ENCODE measurements at regions of chr5 and their contacts with region 1.

Region 1: DNA sequence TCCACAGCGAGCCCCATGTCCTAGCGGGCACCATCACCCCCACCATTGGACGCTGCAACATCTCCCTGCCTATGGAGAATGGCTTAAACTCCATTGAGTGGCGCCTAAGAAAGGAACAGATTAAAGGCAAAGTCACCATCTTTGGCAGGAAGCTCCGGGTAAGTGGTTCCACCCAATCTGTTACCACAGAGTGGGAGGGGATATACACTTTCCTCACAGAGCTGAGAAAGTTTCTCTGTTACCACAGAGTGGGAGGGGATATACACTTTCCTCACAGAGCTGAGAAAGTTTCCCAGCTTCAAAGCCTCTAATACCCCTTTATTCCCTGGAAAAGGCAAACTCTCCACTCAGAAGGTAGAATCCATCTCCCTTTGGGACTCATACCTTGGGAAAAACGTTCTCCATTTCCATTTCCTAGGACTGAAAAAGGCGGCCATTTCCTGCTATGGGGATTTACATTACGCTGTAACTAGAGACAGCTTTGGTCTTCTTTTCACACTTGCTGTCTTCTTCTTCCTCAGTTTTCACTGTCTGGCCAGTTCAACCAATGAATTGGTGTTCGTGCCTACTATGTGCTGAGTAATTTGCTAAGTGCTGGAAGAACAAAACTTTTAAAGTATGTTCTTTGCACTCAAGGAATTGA is 63.4 kb upstream of the WWC1 start:
- DNase-seq: peak; percentile 82
- H3K4me3 Mint-ChIP-seq: peak overlapping the region; percentile 32
- H3K27ac Mint-ChIP-seq: peak overlapping the region; percentile 64
- H3K4me1 Mint-ChIP-seq: peaks cover 23% of the 10 kb centered on the region
- H3K27me3 Mint-ChIP-seq: peaks cover 26% of the 10 kb centered on the region

Region 2: GRCh38 chr5:167244583-167244982 is 983.5 kb before region 1 on chr5:
- intact Hi-C with region 1: no loop called
- DNase-seq: no peak
- H3K4me3 Mint-ChIP-seq: no peak overlapping the region
- H3K27ac Mint-ChIP-seq: no peak overlapping the region
- H3K4me1 Mint-ChIP-seq: no peaks in the 10 kb centered on the region
- H3K27me3 Mint-ChIP-seq: no peaks in the 10 kb centered on the region

Region 3: GRCh38 chr5:168120401-168121137 is 107.5 kb before region 1 on chr5:
- intact Hi-C with region 1: loop called (anchors 1 kb)
- DNase-seq: no peak
- H3K4me3 Mint-ChIP-seq: no peak overlapping the region
- H3K27ac Mint-ChIP-seq: peak overlapping the region; percentile 46
- H3K4me1 Mint-ChIP-seq: peaks cover 15% of the 10 kb centered on the region
- H3K27me3 Mint-ChIP-seq: peaks cover 4% of the 10 kb centered on the region

Region 4: GRCh38 chr5:168249923-168250322 is 21.8 kb after region 1 on chr5:
- intact Hi-C with region 1: loop called (anchors 1 kb)
- DNase-seq: no peak
- H3K4me3 Mint-ChIP-seq: no peak overlapping the region
- H3K27ac Mint-ChIP-seq: no peak overlapping the region
- H3K4me1 Mint-ChIP-seq: peaks cover 7% of the 10 kb centered on the region
- H3K27me3 Mint-ChIP-seq: no peaks in the 10 kb centered on the region